ENCODE measurements at regions of chr18 and their contacts with region 1.

Region 1: GRCh38 chr18:74551936-74552555 is 17.7 kb downstream of the CNDP1 start:
- DNase-seq: peak; percentile 85
- ATAC-seq: peak; percentile 100
- H3K4me3 ChIP-seq: no peak overlapping the region
- H3K27ac ChIP-seq: no peak overlapping the region
- H3K4me1 ChIP-seq: peaks cover 5% of the 10 kb centered on the region
- H3K27me3 ChIP-seq: peaks cover 42% of the 10 kb centered on the region
- CTCF ChIP-seq: peak; percentile 85

Region 2: GRCh38 chr18:74196220-74197119 is 355.6 kb before region 1 on chr18:
- CTCF ChIA-PET with region 1: no interaction called
- POLR2A ChIA-PET with region 1: no interaction called
- intact Hi-C with region 1: loop called (anchors 5 kb)
- DNase-seq: peak; percentile 75
- ATAC-seq: peak; percentile 90
- H3K4me3 ChIP-seq: peak overlapping the region; percentile 67
- H3K27ac ChIP-seq: no peak overlapping the region
- H3K4me1 ChIP-seq: no peaks in the 10 kb centered on the region
- H3K27me3 ChIP-seq: no peaks in the 10 kb centered on the region
- CTCF ChIP-seq: peak; percentile 96

Region 3: DNA sequence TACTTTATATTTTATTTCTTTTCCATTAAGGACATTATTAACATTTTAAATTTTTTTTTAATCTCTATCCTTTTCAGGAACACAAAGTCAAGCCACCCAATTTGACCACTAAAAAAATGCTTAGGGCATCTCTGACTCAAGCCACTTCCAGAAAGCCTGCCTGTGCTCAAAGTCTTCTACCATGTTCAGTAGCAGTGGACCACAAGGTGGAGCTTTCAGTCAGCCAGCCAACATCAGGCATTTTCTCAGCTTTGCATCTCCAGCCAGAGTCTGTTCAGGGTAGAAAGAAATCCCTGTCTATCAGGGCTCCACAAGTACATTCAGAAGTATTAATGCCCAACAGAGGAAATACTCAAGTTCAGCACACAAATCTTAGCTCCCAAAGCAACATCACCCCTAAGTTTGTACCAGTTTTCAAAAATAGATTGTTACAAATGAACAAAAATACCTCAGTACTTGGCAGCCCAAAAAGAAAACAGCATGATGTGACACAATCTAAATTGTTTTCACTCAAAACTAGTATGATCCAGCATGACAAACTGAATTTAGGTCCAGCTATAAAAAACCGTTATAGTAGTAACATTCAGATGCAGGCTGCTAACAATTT is 198.8 kb before region 1 on chr18:
- CTCF ChIA-PET with region 1: interaction called, 10 read pairs
- POLR2A ChIA-PET with region 1: no interaction called
- intact Hi-C with region 1: loop called (anchors 1 kb)
- DNase-seq: peak; percentile 73
- ATAC-seq: peak; percentile 93
- H3K4me3 ChIP-seq: no peak overlapping the region
- H3K27ac ChIP-seq: no peak overlapping the region
- H3K4me1 ChIP-seq: peaks cover 10% of the 10 kb centered on the region
- H3K27me3 ChIP-seq: peaks cover 38% of the 10 kb centered on the region
- CTCF ChIP-seq: peak; percentile 79

Region 4: DNA sequence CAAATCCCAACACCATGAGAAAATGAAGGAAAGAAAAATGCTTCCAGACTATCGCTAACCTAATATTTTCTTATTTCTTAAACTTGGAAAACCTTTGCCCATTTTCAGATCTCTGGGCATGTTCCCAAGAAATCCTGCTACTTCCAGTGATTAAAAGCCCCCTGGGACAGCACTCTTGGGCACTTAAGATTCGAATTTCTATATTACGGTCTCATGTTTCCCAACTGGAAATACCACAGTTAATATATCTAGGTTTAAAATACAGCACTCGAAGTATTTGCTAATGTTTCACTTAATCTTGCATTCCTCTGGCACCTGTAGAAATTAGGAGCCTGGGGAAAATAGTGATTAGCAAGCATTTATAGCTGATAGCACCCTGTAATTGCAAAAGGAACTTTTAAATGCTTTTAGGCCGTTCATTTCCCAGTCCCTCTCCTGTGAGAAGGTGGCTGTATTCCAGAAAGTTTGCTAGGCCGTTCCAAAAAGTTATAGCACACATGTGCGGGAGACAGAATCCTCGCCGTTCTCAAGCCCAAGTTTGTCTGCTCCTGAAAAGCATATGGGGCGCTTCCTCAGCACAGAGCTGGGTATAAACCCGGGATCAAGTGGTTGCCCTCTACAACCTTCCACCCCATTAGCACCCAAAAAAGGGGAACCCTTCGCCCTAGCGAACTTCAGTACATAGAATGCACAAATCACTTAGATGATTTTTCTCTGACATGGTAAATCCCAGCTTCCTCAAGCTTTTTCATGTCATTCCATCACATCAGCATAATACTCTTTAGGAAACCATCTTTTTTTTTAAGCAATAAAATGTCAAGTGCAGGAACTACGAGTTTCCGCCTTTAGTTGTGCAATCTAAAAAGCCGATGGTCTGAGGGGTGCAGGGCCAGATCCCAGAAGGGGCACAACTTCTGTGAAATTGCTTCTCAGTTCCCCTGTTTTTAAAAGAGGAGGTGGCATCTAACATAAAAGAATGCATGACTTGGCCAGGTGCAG is 155.6 kb before region 1 on chr18:
- CTCF ChIA-PET with region 1: no interaction called
- POLR2A ChIA-PET with region 1: no interaction called
- intact Hi-C with region 1: loop called (anchors 1 kb)
- DNase-seq: no peak
- ATAC-seq: no peak
- H3K4me3 ChIP-seq: no peak overlapping the region
- H3K27ac ChIP-seq: no peak overlapping the region
- H3K4me1 ChIP-seq: no peaks in the 10 kb centered on the region
- H3K27me3 ChIP-seq: peaks cover 97% of the 10 kb centered on the region
- CTCF ChIP-seq: no peak

Region 5: DNA sequence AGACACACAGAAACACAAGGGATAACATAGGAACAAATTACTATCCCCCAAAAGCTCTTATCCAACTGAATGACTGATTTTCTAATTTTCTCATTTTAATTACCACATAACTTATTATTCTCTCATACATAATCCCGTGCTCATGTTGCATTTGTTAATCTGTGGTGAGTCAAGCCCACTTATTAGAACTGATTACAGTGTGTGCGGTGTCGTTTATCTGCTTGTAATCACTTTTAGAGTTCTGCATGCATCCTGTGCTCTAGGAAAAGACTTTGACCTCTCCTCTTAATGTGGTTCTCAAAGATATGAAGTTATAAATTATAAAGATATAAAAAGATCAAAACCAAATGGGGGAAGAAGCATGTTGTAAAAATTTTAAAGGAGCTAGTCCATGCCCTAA is 12.0 kb after region 1 on chr18:
- CTCF ChIA-PET with region 1: interaction called, 10 read pairs
- POLR2A ChIA-PET with region 1: no interaction called
- intact Hi-C with region 1: no loop called
- DNase-seq: no peak
- ATAC-seq: no peak
- H3K4me3 ChIP-seq: no peak overlapping the region
- H3K27ac ChIP-seq: no peak overlapping the region
- H3K4me1 ChIP-seq: no peaks in the 10 kb centered on the region
- H3K27me3 ChIP-seq: peaks cover 31% of the 10 kb centered on the region
- CTCF ChIP-seq: no peak